Breast epithelium (tissue), 4 donors: ENCODE measurements at regions of chr12 and their contacts with region 1.

Region 1: GRCh38 chr12:3148366-3149000 is 71.3 kb downstream of the TSPAN9 start:
- DNase-seq: no peak
- H3K4me3 ChIP-seq: no peak overlapping the region
- H3K27ac ChIP-seq: peak overlapping the region in 1 of 2 donors; percentile 43
- H3K4me1 ChIP-seq: peaks cover 3 to 11% of the 10 kb centered on the region in 2 donors
- H3K27me3 ChIP-seq: no peaks in the 10 kb centered on the region
- CTCF ChIP-seq: no peak
- POLR2A ChIP-seq: no peak

Region 2: DNA sequence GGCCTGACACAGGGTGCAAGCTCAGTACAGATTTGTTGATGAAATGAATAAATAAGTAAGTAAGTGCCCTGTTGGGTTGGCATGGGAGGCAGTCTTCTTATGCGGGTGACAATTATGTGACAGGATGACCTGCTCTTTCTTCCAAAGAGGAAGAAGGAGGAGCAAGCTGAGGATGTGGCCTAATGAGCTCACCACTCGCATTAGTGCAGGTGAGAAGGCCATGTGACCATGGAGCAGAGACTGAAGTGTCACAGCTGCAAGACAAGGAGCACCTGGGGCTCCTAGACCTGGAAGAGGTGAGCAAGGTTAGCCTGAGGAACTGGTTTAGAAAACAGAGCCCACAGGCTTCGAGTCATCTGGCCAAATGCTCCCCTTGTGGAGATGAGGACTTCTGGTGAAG is 1293.2 kb before region 1 on chr12:
- intact Hi-C with region 1: no loop called
- DNase-seq: no peak
- H3K4me3 ChIP-seq: no peak overlapping the region
- H3K27ac ChIP-seq: no peak overlapping the region
- H3K4me1 ChIP-seq: no peaks in the 10 kb centered on the region
- H3K27me3 ChIP-seq: peaks cover 0 to 7% of the 10 kb centered on the region in 2 donors
- CTCF ChIP-seq: no peak
- POLR2A ChIP-seq: no peak

Region 3: DNA sequence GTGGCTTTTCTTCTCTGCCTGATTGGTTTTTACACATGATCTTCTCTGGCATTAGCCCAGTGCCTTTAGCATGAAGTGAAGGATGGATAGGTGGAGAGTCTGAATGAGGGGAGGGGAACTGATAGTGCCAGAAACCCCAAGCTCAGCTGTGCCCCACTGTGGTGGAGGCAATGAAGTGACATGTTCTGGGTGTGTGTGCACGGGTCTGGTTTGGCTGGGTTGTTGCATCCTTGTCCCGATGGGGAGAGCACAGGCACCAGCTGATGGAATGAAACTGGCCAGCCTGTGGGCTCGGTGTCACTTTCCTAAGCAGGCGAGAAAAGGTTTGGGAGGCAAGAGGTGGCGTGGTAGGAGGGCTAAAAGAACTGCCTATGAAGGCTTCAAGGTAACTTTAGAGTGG is 1030.4 kb before region 1 on chr12:
- intact Hi-C with region 1: no loop called
- DNase-seq: no peak
- H3K4me3 ChIP-seq: no peak overlapping the region
- H3K27ac ChIP-seq: no peak overlapping the region
- H3K4me1 ChIP-seq: no peaks in the 10 kb centered on the region
- H3K27me3 ChIP-seq: no peaks in the 10 kb centered on the region
- CTCF ChIP-seq: no peak
- POLR2A ChIP-seq: no peak

Region 4: GRCh38 chr12:3186546-3187215 is 38.2 kb after region 1 on chr12:
- intact Hi-C with region 1: loop called (anchors 5 kb)
- DNase-seq: no peak
- H3K4me3 ChIP-seq: no peak overlapping the region
- H3K27ac ChIP-seq: no peak overlapping the region
- H3K4me1 ChIP-seq: no peaks in the 10 kb centered on the region
- H3K27me3 ChIP-seq: no peaks in the 10 kb centered on the region
- CTCF ChIP-seq: no peak
- POLR2A ChIP-seq: no peak

Region 5: DNA sequence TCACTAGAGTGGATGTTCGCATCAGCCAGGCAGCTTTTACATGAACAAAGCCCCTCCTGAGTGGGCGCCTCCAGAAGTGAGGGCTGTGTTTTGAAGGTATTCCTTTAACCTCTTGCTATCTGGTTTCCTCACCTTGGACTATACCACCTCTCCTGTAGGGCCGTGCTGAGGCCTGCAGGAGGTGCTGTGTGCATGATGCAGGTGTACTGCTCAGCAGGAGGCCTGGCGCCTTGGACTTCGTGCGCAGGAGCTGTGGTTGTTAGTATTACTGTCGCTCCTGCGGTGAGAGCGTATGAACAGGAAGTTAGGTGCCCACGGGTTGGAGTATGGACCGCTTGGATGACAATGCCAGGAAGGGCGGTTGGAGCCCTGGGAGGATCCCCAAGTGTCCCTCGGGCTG is 59.4 kb after region 1 on chr12:
- intact Hi-C with region 1: no loop called
- DNase-seq: no peak
- H3K4me3 ChIP-seq: no peak overlapping the region
- H3K27ac ChIP-seq: no peak overlapping the region
- H3K4me1 ChIP-seq: peaks cover 0 to 3% of the 10 kb centered on the region in 2 donors
- H3K27me3 ChIP-seq: no peaks in the 10 kb centered on the region
- CTCF ChIP-seq: no peak
- POLR2A ChIP-seq: no peak

Region 6: GRCh38 chr12:3275171-3276041 is 126.9 kb after region 1 on chr12:
- intact Hi-C with region 1: loop called (anchors 10 kb)
- DNase-seq: peak; percentile 51 to 80
- H3K4me3 ChIP-seq: no peak overlapping the region
- H3K27ac ChIP-seq: no peak overlapping the region
- H3K4me1 ChIP-seq: no peaks in the 10 kb centered on the region
- H3K27me3 ChIP-seq: no peaks in the 10 kb centered on the region
- CTCF ChIP-seq: peak; percentile 80 to 94 (median 87)
- POLR2A ChIP-seq: no peak